Prostate gland (tissue), 2 donors: ENCODE measurements at regions of chr21 and their contacts with region 1.

Region 1: GRCh38 chr21:32257962-32258785 is 20.7 kb downstream of the MIS18A start:
- DNase-seq: peak; percentile 76
- H3K4me3 ChIP-seq: no peak overlapping the region
- H3K27ac ChIP-seq: no peak overlapping the region
- H3K4me1 ChIP-seq: no peaks in the 10 kb centered on the region
- H3K27me3 ChIP-seq: no peaks in the 10 kb centered on the region
- CTCF ChIP-seq: peak in 3 of 4 experiments; percentile 77 to 89 (median 83)
- POLR2A ChIP-seq: no peak

Region 2: DNA sequence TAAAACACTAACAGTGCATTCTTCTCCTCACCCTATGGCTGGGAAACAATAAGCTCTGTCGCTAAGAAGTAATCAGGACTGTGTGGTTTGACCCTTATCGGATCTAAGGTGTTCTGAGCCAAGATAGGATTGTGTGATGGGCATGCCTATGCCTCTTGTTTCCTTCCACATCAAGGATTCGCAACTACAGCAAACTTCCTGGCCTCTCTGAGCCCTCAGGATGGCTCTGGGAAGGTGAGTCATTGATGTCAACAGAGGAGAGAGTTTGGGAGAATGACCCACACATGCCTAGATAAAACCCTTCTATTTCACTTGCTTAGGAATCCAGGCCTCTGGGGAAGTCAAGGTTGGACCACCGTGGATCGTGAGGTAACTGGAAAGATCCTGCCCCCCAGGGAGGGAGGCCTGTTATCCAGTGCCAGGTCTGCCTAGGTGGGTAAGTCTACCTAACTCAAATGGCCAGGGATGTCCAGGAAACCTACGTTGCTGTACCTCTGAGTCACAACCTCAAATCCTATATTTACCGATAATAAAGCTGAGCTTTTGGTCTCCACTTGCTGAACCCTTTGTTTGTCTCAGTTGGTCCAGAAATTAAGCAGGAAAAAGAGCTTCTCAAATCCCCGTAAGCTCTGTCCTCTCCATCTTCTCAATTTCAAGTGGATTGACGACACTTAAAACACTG is 941.5 kb before region 1 on chr21:
- intact Hi-C with region 1: no loop called
- DNase-seq: no peak
- H3K4me3 ChIP-seq: no peak overlapping the region
- H3K27ac ChIP-seq: no peak overlapping the region
- H3K4me1 ChIP-seq: no peaks in the 10 kb centered on the region
- H3K27me3 ChIP-seq: no peaks in the 10 kb centered on the region
- CTCF ChIP-seq: no peak
- POLR2A ChIP-seq: no peak

Region 3: GRCh38 chr21:31786164-31786920 is 471.8 kb before region 1 on chr21:
- intact Hi-C with region 1: loop called (anchors 5 kb)
- DNase-seq: no peak
- H3K4me3 ChIP-seq: no peak overlapping the region
- H3K27ac ChIP-seq: no peak overlapping the region
- H3K4me1 ChIP-seq: no peaks in the 10 kb centered on the region
- H3K27me3 ChIP-seq: no peaks in the 10 kb centered on the region
- CTCF ChIP-seq: no peak
- POLR2A ChIP-seq: no peak

Region 4: DNA sequence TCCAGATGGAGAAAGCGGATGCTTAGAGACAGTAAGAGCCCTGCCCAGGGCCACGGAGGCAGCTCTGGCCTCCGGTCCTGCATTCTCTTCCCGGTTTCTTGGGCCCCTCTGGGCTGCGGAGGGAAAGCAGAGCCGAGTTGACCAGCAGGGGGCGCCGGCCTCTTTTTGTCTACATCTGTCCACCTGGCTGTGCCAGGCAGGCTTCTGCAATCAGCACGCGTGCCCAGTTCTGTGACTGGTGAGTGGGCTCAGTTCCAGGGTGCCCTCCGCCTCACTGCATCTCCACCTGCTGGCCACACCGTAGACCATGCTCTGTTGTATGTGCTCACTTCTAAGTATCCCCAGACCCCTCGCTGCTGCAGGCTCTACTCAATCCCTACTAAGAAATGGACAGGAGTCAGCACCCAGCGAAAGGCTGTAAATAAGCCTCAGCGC is 392.1 kb before region 1 on chr21:
- intact Hi-C with region 1: loop called (anchors 1 kb)
- DNase-seq: peak; percentile 92
- H3K4me3 ChIP-seq: no peak overlapping the region
- H3K27ac ChIP-seq: no peak overlapping the region
- H3K4me1 ChIP-seq: no peaks in the 10 kb centered on the region
- H3K27me3 ChIP-seq: no peaks in the 10 kb centered on the region
- CTCF ChIP-seq: peak; percentile 80 to 95 (median 94)
- POLR2A ChIP-seq: no peak

Region 5: GRCh38 chr21:32143241-32143939 is 114.8 kb before region 1 on chr21:
- intact Hi-C with region 1: loop called (anchors 5 kb)
- DNase-seq: no peak
- H3K4me3 ChIP-seq: no peak overlapping the region
- H3K27ac ChIP-seq: no peak overlapping the region
- H3K4me1 ChIP-seq: no peaks in the 10 kb centered on the region
- H3K27me3 ChIP-seq: no peaks in the 10 kb centered on the region
- CTCF ChIP-seq: peak in 1 of 4 experiments; percentile 15
- POLR2A ChIP-seq: no peak

Region 6: GRCh38 chr21:32162727-32163320 is 95.3 kb before region 1 on chr21:
- intact Hi-C with region 1: no loop called
- DNase-seq: no peak
- H3K4me3 ChIP-seq: no peak overlapping the region
- H3K27ac ChIP-seq: no peak overlapping the region
- H3K4me1 ChIP-seq: no peaks in the 10 kb centered on the region
- H3K27me3 ChIP-seq: no peaks in the 10 kb centered on the region
- CTCF ChIP-seq: no peak
- POLR2A ChIP-seq: no peak